ENCODE measurements at regions of chr9 and their contacts with region 1.

Region 1: GRCh38 chr9:35718721-35719511 is 13.1 kb downstream of the TLN1 start:
- DNase-seq: no peak
- ATAC-seq: no peak
- H3K4me3 ChIP-seq: no peak overlapping the region
- H3K27ac ChIP-seq: no peak overlapping the region
- H3K4me1 ChIP-seq: no peaks in the 10 kb centered on the region
- H3K27me3 ChIP-seq: no peaks in the 10 kb centered on the region
- CTCF ChIP-seq: no peak

Region 2: DNA sequence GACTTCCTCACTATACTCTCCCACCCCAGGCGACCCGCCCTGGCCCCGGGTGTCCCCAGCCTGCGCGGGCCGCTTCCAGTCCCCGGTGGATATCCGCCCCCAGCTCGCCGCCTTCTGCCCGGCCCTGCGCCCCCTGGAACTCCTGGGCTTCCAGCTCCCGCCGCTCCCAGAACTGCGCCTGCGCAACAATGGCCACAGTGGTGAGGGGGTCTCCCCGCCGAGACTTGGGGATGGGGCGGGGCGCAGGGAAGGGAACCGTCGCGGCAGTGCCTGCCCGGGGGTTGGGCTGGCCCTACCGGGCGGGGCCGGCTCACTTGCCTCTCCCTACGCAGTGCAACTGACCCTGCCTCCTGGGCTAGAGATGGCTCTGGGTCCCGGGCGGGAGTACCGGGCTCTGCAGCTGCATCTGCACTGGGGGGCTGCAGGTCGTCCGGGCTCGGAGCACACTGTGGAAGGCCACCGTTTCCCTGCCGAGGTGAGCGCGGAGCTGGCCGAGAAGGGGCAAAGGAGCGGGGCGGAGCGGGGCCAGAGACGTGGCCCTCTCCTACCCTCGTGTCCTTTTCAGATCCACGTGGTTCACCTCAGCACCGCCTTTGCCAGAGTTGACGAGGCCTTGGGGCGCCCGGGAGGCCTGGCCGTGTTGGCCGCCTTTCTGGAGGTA is 43.1 kb before region 1 on chr9:
- intact Hi-C with region 1: loop called in 1 of 2 experiments (anchors 2 kb)
- DNase-seq: peak in 1 of 2 donors; percentile 66
- ATAC-seq: peak in 3 of 4 donors; percentile 25 to 32 (median 26)
- H3K4me3 ChIP-seq: peak overlapping the region; percentile 72
- H3K27ac ChIP-seq: no peak overlapping the region
- H3K4me1 ChIP-seq: peaks cover 20% of the 10 kb centered on the region
- H3K27me3 ChIP-seq: no peaks in the 10 kb centered on the region
- CTCF ChIP-seq: no peak

Measured in psoas muscle (tissue), 8 donors.